Right ventricle myocardium superior (tissue), 1 donor: ENCODE measurements at regions of chr3 and their contacts with region 1.

Region 1: GRCh38 chr3:172476347-172476746 is 28.1 kb upstream of the GHSR start:
- DNase-seq: no peak
- ATAC-seq: peak; percentile 52

Region 2: DNA sequence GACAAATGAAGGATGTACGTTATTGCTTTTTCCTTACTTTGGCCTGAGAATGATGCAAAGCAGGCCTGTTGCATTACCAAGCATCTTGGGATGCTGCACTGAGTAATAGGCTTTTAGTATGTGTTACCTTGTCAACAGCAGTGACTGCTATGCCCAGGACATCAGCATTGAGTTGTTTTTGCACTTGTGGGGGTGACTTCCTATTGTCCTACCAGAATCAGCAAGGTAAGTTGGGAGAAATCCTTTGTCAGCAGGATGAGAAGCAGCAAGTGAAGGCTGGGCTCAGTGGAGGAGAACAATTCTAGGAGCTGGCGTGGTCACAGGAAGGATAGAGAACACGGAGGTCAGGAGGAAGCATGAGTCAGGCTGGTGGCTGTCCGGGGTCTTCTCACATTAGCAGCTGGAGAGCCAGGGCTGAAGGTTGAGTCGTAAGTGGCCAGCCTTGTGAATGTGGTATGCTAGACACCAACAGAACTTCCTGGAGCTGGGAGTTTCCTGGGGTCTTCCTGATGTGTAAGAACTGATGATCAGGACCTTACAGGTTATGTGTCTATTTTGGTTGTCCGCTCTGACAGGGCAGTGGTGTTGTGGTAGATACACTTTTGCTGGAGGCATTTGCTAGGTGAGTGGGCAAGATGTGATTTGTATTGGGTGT is 294.3 kb before region 1 on chr3:
- intact Hi-C with region 1: no loop called
- DNase-seq: no peak
- ATAC-seq: no peak

Region 3: GRCh38 chr3:172369590-172370259 is 106.6 kb before region 1 on chr3:
- intact Hi-C with region 1: loop called (anchors 10 kb)
- DNase-seq: no peak
- ATAC-seq: peak; percentile 90